ENCODE measurements at regions of chr5 and their contacts with region 1.

Region 1: DNA sequence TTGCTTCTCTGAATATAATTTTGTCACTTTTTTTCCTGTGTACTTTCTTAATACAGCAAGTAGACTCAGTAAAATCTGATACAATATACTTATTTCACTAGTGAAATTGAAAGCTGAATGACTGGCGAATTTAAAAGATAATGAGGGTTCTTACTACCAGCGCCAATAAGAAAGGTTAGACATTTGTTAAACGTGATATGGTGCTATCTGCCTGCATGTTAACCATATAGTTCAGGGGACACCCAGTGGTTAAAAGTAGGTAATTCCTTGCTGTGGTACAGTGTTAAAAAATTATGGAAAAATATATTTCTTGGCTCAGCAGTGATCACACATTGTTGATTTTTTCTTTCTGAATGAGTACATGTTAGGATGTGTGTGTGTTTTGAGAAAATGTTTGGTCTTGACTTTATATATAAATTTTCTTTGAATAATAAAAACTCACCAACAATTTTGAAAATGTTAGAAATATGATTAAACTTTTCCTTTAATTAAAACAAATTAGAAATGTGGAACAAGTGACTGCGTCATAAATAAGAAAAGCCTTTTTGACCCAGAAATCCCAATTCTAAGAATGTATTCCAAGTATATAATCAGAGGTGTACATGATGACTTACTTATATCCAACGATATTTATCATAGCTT is 25.8 kb downstream of the CAST start:
- DNase-seq: no peak
- ATAC-seq: peak; percentile 54 to 79 (median 64)
- H3K4me3 ChIP-seq: no peak overlapping the region
- H3K27ac ChIP-seq: no peak overlapping the region
- H3K4me1 ChIP-seq: peaks cover 23% of the 10 kb centered on the region
- H3K27me3 ChIP-seq: no peaks in the 10 kb centered on the region
- CTCF ChIP-seq: peak; percentile 65

Region 2: GRCh38 chr5:95564450-95564849 is 1123.5 kb before region 1 on chr5:
- intact Hi-C with region 1: loop called in 1 of 2 experiments (anchors 5 kb)
- DNase-seq: no peak
- ATAC-seq: no peak
- H3K4me3 ChIP-seq: no peak overlapping the region
- H3K27ac ChIP-seq: no peak overlapping the region
- H3K4me1 ChIP-seq: no peaks in the 10 kb centered on the region
- H3K27me3 ChIP-seq: no peaks in the 10 kb centered on the region
- CTCF ChIP-seq: no peak

Region 3: DNA sequence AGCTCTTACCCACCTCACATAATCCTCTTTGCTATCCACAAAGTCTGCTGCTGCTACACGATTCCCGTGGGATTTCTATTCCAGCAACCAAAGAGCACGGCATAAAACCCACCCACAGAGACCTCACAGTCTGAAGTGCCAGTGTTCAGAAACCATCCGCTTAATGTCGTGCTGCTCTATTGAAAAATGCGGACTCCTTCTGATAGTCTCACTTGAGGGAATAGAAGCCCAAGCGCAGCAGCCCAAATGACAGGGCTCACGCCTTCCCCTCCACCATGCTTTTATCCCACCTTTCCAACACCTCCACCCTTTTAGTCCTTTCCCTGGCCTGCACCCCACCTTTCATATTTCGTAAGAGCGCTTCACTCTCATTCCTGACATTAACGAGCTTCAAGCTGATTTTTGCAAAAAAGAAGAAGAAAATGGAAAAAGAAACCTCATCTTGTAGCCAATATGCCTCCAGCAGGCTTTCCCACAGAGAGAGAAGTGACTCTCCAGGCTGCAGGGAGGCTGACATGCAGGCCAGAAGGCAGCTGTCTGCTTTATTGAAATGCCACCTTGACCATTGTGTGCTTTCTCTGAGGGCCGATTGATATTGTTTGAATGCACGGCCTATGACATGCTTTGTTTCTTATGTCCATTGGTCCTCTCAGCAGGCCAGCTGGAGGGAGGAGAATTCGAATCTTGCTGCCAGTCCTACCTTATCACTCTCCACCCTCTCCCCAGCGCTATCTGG is 184.3 kb before region 1 on chr5:
- intact Hi-C with region 1: no loop called
- DNase-seq: no peak
- ATAC-seq: no peak
- H3K4me3 ChIP-seq: no peak overlapping the region
- H3K27ac ChIP-seq: no peak overlapping the region
- H3K4me1 ChIP-seq: no peaks in the 10 kb centered on the region
- H3K27me3 ChIP-seq: no peaks in the 10 kb centered on the region
- CTCF ChIP-seq: no peak

Region 4: DNA sequence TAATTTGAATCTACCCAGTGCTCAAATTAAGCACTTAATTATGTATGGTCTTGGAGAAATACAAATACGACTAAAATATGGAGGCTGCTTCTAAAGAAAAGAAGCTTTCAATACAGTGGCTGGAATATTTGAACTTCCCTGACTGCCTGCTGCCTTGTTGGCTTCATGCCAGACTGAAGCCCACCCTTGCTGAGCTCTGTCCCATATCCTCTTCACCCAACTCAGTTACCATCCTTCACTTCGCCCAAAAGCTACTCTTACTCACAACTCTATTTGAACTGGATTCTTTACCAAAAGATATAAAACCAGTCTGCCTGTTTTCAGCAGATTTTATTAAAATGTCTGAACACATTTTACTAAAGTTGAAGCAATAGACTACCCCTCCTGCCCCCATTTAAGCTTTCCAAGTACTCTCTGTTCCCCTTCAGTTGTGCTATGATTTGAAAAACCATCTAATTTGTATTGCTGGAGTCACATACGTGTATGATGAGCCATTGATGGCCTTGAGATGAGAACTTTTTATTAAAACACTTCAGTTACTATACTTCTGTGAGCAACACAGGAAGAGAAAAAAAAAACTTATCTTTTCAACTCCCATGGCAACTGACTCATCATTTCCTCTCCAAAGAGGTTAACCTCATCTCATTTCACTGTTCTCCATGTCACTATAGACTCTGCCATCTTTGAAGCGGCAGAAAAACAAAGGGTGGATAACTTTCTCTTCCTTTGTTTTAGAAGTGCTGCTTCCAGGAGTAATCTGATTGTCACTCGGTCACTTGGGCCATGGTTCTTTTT is 150.7 kb before region 1 on chr5:
- intact Hi-C with region 1: no loop called
- DNase-seq: no peak
- ATAC-seq: no peak
- H3K4me3 ChIP-seq: no peak overlapping the region
- H3K27ac ChIP-seq: no peak overlapping the region
- H3K4me1 ChIP-seq: no peaks in the 10 kb centered on the region
- H3K27me3 ChIP-seq: peaks cover 0 to 2% (median 0%) of the 10 kb centered on the region in 3 donors
- CTCF ChIP-seq: no peak

Region 5: GRCh38 chr5:96614110-96614691 is 73.7 kb before region 1 on chr5:
- intact Hi-C with region 1: loop called (anchors 1 to 5 kb)
- DNase-seq: no peak
- ATAC-seq: peak; percentile 93 to 98 (median 96)
- H3K4me3 ChIP-seq: no peak overlapping the region
- H3K27ac ChIP-seq: peak overlapping the region; percentile 48
- H3K4me1 ChIP-seq: peaks cover 8% of the 10 kb centered on the region
- H3K27me3 ChIP-seq: no peaks in the 10 kb centered on the region
- CTCF ChIP-seq: peak; percentile 63

Region 6: GRCh38 chr5:96714951-96715451 is 27.1 kb after region 1 on chr5:
- intact Hi-C with region 1: no loop called
- DNase-seq: peak in 1 of 2 donors; percentile 25
- ATAC-seq: peak; percentile 83 to 92 (median 86)
- H3K4me3 ChIP-seq: no peak overlapping the region
- H3K27ac ChIP-seq: peak overlapping the region; percentile 70
- H3K4me1 ChIP-seq: peaks cover 81% of the 10 kb centered on the region
- H3K27me3 ChIP-seq: no peaks in the 10 kb centered on the region
- CTCF ChIP-seq: no peak

Region 7: DNA sequence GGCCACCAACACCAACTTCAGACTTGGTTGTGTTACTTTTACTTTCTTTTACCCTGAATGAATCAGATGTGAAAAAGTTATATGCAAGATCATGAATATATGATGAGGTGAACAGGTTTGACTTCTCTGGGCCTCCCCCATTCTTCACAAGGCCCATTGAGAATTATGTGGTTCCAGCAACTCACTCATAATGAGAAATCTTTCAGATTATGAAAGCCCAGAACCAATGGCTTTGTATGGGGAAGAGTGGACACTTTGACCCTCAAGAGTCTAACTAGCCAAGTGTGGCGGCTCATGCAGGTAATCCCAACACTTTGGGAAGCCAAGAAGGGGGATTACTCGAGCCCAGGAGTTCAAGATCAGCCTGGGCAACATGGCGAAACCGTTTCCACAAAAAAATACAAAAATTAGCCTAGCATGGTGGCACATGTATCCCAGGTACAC is 231.8 kb after region 1 on chr5:
- intact Hi-C with region 1: no loop called
- DNase-seq: no peak
- ATAC-seq: no peak
- H3K4me3 ChIP-seq: no peak overlapping the region
- H3K27ac ChIP-seq: no peak overlapping the region
- H3K4me1 ChIP-seq: peaks cover 31% of the 10 kb centered on the region
- H3K27me3 ChIP-seq: no peaks in the 10 kb centered on the region
- CTCF ChIP-seq: no peak